ENCODE measurements at regions of chr10 and their contacts with region 1.

Region 1: GRCh38 chr10:4813023-4813422 is 13.0 kb upstream of the AKR1E2 start:
- DNase-seq: peak; percentile 85 to 91
- ATAC-seq: peak; percentile 85 to 95
- H3K4me3 ChIP-seq: no peak overlapping the region
- H3K27ac ChIP-seq: peak overlapping the region; percentile 79 to 83
- H3K4me1 ChIP-seq: peaks cover 54% of the 10 kb centered on the region
- CTCF ChIP-seq: no peak
- EP300 ChIP-seq: peak in 1 of 2 experiments; percentile 55; a peak in 2 of 5 replicates
- POLR2A ChIP-seq: no peak
- RAD21 ChIP-seq: peak in 1 of 2 experiments; percentile 16; a peak in 1 of 5 replicates

Region 2: DNA sequence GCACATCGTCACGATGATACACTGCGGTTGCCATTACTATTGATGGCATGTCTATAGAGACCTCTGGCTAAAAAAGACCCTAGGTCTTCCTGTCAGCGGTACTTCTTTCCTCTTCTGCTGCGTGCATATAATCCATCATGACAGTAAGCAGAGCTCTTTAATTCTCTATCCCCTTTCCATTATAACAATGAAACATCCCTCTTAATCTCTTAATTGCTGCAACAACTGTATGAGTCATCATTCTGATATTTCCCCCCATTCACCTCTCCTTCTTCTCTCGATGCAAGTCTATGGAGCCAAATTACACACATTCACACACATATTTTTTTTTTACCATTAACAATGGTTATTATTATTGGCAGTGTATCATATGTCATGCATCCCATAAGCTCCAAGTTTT is 32.2 kb before region 1 on chr10:
- CTCF ChIA-PET with region 1: interaction called, 10 read pairs
- POLR2A ChIA-PET with region 1: no interaction called
- DNase-seq: no peak
- ATAC-seq: no peak
- H3K4me3 ChIP-seq: no peak overlapping the region
- H3K27ac ChIP-seq: no peak overlapping the region
- H3K4me1 ChIP-seq: peaks cover 7% of the 10 kb centered on the region; the same call in 2 of the 3 replicates
- CTCF ChIP-seq: no peak
- EP300 ChIP-seq: no peak
- POLR2A ChIP-seq: no peak
- RAD21 ChIP-seq: no peak

Region 3: DNA sequence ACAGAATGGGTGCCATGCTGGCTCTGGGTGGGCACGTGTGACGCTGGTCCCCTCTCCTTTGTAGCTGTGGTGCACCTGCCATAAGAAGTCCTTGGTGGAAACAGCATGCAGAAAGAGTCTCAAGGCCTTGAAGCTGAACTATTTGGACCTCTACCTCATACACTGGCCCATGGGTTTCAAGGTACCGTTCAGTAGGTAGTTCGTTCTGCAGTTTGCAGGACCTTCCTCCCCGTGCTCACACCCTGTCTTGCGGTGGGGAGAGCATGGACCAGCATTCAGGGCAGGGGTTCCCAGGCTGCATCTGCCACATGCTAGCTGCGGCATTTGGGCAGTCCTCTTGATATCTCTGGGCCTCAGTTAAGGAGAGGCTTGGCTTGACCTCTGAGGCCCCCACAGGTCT is 20.3 kb after region 1 on chr10:
- CTCF ChIA-PET with region 1: interaction called, 41 read pairs
- POLR2A ChIA-PET with region 1: no interaction called
- DNase-seq: no peak
- ATAC-seq: no peak
- H3K4me3 ChIP-seq: no peak overlapping the region
- H3K27ac ChIP-seq: no peak overlapping the region
- H3K4me1 ChIP-seq: peaks cover 18% of the 10 kb centered on the region; the same call in 2 of the 3 replicates
- CTCF ChIP-seq: no peak
- EP300 ChIP-seq: no peak
- POLR2A ChIP-seq: no peak
- RAD21 ChIP-seq: no peak

Region 4: DNA sequence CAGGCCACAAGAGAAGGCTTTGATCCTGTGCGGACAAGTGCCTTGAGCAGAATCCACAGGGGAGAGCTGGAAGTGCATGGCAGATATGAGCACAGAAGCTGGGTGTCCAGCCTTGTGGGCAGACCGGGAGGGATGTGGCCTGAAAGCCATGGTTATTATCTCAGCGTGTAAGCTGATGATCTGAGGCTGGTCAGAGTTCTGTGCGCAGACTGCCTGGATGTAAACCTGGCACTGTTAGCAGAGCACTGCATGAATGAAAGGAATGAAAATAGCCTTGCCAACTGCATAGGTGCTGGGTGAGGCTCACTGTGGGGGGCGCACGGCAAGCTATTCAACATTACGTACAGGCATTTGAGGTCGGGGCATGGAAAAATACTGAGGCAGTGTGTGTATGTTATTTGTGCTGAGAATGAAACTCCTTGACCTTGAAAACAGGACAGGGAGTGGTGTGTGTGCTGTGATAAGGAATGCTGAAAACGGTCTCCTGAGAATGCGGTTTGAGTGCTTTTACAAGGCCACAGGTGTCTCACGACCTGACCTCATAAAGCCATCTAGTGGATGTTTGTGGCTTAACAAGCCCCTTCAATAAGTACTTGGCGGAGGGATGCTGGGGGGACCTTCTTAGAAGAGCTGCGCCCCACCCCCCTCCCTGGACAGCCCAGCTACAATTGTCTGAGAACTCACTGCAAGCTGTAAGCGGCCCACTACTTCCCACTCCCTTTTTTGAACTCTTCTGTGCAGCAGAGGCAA is 168.9 kb after region 1 on chr10:
- CTCF ChIA-PET with region 1: interaction called, 25 read pairs
- POLR2A ChIA-PET with region 1: interaction called, 6 read pairs
- DNase-seq: peak in 1 of 2 experiments; percentile 94
- ATAC-seq: peak; percentile 1 to 7
- H3K4me3 ChIP-seq: no peak overlapping the region
- H3K27ac ChIP-seq: peak overlapping the region; percentile 81 to 93
- H3K4me1 ChIP-seq: peaks cover 81% of the 10 kb centered on the region
- CTCF ChIP-seq: peak; percentile 51
- EP300 ChIP-seq: peak in 1 of 2 experiments; percentile 42; a peak in 1 of 5 replicates
- POLR2A ChIP-seq: no peak
- RAD21 ChIP-seq: peak; percentile 70 to 72

Region 5: GRCh38 chr10:5283305-5284158 is 470.5 kb after region 1 on chr10:
- CTCF ChIA-PET with region 1: interaction called, 11 read pairs
- POLR2A ChIA-PET with region 1: no interaction called
- DNase-seq: peak; percentile 60 to 93
- ATAC-seq: peak; percentile 91 to 92
- H3K4me3 ChIP-seq: peak overlapping the region; percentile 1; the same call in 1 of the 3 replicates
- H3K27ac ChIP-seq: peak overlapping the region; percentile 96 to 97
- H3K4me1 ChIP-seq: peaks cover 41% of the 10 kb centered on the region
- CTCF ChIP-seq: peak; percentile 86
- EP300 ChIP-seq: 0 out of 5 replicates have a peak, but pooled peaks of 1 of the 2 experiments have one; percentile 27
- POLR2A ChIP-seq: no peak
- RAD21 ChIP-seq: peak; percentile 92 to 93

Region 6: GRCh38 chr10:5434017-5434753 is 621.2 kb after region 1 on chr10:
- CTCF ChIA-PET with region 1: interaction called, 67 read pairs
- POLR2A ChIA-PET with region 1: no interaction called
- DNase-seq: peak; percentile 40 to 73
- ATAC-seq: peak; percentile 94
- H3K4me3 ChIP-seq: no peak overlapping the region
- H3K27ac ChIP-seq: peak overlapping the region; percentile 75 to 78
- H3K4me1 ChIP-seq: peaks cover 26% of the 10 kb centered on the region
- CTCF ChIP-seq: peak; percentile 96
- EP300 ChIP-seq: no peak
- POLR2A ChIP-seq: no peak
- RAD21 ChIP-seq: peak; percentile 88 to 93